Naive thymus-derived CD4-positive, alpha-beta T cell (primary cell): ENCODE measurements at regions of chr19 and their contacts with region 1.

Region 1: DNA sequence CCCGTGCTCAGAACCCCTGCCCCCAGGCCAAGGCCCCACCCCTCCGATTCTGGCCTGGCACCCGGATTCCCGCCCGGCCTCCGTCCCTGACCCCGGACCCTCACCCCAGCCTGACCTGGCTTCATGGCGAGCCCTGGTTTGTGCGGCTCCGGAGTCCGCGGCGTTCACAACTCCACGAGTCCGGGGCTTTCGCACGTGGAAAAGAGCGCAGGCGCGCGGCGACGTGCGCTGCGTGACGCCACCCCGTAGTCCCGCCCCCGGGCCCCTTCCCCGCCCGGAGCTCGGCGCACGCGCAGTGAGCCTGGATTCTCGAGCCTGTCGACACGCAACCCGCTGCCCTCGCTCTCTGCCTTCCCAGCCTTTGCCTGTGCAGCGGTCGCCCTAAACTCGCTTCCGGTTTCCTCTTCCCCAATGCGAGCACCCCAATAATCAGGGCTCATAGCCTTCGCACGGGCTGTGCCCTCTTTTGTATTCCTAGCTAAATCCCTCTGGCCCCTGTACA is at the start of gene FBL:
- DNase-seq: peak; percentile 93 to 99 (median 97)
- ATAC-seq: peak; percentile 95
- H3K4me3 ChIP-seq: peak within 1 kb of the TSS; percentile 95
- H3K4me3 Mint-ChIP-seq: peak within 1 kb of the TSS; percentile 82 to 95 (median 92)
- H3K27ac ChIP-seq: peak within 1 kb of the TSS; percentile 94
- H3K27ac Mint-ChIP-seq: peak within 1 kb of the TSS; percentile 86 to 99 (median 95)
- H3K4me1 ChIP-seq: peaks cover 13 to 43% of the 10 kb centered on the region in 2 donors
- H3K4me1 Mint-ChIP-seq: peaks cover 38 to 55% (median 45%) of the 10 kb centered on the region in 7 donors
- H3K27me3 ChIP-seq: no peaks in the 10 kb centered on the region
- H3K27me3 Mint-ChIP-seq: peaks cover 0 to under 1% (median 0%) of the 10 kb centered on the region in 5 donors
- total RNA-seq, gene FBL: 237 to 387 (median 369) TPM

Region 2: DNA sequence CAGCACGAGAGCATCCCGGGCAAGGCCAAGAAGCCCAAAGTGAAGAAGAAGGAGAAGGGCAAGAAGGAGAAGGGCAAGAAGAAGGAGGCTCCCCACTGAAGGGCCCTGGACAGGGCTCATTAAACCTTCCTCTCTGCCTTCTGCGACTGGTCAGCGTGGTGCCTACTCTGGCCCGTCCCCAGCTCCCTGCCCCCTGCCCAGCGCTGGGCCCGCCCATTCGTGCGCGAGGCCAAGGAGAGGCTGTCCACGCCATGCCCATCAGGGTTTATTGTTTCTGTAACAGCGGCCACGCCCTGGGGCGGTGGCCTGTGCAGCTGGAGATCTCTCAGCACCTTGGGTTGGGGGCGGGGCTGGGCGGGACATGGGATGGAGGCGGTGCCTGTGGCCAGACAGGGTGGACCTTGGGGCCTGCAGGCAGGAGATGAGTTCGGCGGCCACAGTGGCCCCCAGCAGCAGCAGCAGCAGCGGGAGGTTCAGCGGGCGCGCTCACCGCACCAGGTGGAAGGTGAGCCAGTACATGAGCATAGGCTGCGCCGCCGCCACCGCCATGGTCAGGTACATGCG is 1541.3 kb before region 1 on chr19:
- CTCF ChIA-PET with region 1: no interaction called
- POLR2A ChIA-PET with region 1: no interaction called
- intact Hi-C with region 1: no loop called
- DNase-seq: no peak
- ATAC-seq: no peak
- H3K4me3 ChIP-seq: no peak overlapping the region
- H3K4me3 Mint-ChIP-seq: no peak overlapping the region
- H3K27ac ChIP-seq: no peak overlapping the region
- H3K27ac Mint-ChIP-seq: no peak overlapping the region
- H3K4me1 ChIP-seq: no peaks in the 10 kb centered on the region
- H3K4me1 Mint-ChIP-seq: peaks cover 0 to 8% (median 0%) of the 10 kb centered on the region in 7 donors
- H3K27me3 ChIP-seq: no peaks in the 10 kb centered on the region
- H3K27me3 Mint-ChIP-seq: no peaks in the 10 kb centered on the region

Region 3: DNA sequence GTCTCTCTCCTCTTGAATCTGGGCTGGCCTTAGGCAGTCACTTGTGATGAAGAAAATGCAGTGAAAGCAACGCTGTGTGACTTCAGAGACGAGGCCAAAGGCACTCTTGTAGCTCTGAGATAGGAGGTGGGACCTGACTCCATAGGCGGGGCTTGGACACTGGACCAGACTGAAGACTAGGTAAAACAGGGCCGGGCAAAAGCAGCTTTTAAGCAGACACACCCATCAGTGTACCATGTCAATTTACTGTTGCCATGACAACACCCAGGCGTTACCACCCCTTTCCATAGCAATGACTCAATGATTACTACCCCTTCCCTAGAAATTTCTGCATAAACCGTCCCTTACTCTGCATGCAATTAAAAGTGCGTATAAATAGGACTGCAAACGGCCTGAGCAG is 299.6 kb before region 1 on chr19:
- CTCF ChIA-PET with region 1: interaction called, 4 read pairs
- POLR2A ChIA-PET with region 1: no interaction called
- intact Hi-C with region 1: loop called (anchors 1 to 2 kb)
- DNase-seq: no peak
- ATAC-seq: no peak
- H3K4me3 ChIP-seq: no peak overlapping the region
- H3K4me3 Mint-ChIP-seq: peak overlapping the region in 5 of 10 donors; percentile 15 to 55 (median 43)
- H3K27ac ChIP-seq: no peak overlapping the region
- H3K27ac Mint-ChIP-seq: peak overlapping the region in 8 of 9 donors; percentile 28 to 83 (median 70)
- H3K4me1 ChIP-seq: peaks cover 5 to 35% of the 10 kb centered on the region in 2 donors
- H3K4me1 Mint-ChIP-seq: peaks cover 24 to 58% (median 48%) of the 10 kb centered on the region in 7 donors
- H3K27me3 ChIP-seq: no peaks in the 10 kb centered on the region
- H3K27me3 Mint-ChIP-seq: peaks cover 0 to 4% (median 0%) of the 10 kb centered on the region in 5 donors

Region 4: GRCh38 chr19:39679056-39679790 is 167.0 kb before region 1 on chr19:
- CTCF ChIA-PET with region 1: interaction called, 11 read pairs
- POLR2A ChIA-PET with region 1: no interaction called
- intact Hi-C with region 1: loop called (anchors 1 to 2 kb)
- DNase-seq: peak in 4 of 9 donors; percentile 18 to 59 (median 24)
- ATAC-seq: peak; percentile 73
- H3K4me3 ChIP-seq: peak overlapping the region; percentile 43
- H3K4me3 Mint-ChIP-seq: peak overlapping the region; percentile 80 to 92 (median 84)
- H3K27ac ChIP-seq: peak overlapping the region; percentile 50
- H3K27ac Mint-ChIP-seq: peak overlapping the region; percentile 83 to 97 (median 92)
- H3K4me1 ChIP-seq: peaks cover 15 to 32% of the 10 kb centered on the region in 2 donors
- H3K4me1 Mint-ChIP-seq: peaks cover 22 to 61% (median 46%) of the 10 kb centered on the region in 7 donors
- H3K27me3 ChIP-seq: no peaks in the 10 kb centered on the region
- H3K27me3 Mint-ChIP-seq: no peaks in the 10 kb centered on the region

Region 5: DNA sequence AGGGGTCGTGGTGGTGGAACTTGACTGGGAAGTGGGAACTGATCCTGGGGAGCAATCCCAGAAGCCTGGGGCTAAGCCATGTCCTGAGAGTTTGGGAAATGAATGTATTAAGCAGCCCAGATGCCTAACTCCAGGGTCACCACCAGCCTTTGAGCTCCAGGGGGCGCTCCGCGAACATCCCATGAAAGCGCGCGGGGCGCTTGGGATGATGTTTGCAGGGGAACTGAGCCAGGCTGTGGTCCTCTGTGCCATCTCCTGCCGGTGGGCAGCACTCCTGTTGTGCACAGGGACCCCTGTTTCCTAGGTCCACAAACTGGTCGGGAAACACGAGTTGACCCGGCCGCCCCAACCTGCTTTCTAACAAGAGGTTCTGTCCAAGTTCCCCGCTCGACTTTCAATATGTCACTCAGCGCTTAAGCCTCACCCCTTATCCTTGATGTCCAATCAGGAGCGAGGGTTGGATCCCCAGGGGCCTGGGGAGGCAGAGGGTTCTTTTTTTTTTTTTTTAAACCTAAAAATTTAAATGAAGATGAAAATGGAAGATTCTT is 53.2 kb before region 1 on chr19:
- CTCF ChIA-PET with region 1: interaction called, 41 read pairs
- POLR2A ChIA-PET with region 1: interaction called, 4 read pairs
- intact Hi-C with region 1: loop called (anchors 1 kb)
- DNase-seq: peak; percentile 56 to 80 (median 72)
- ATAC-seq: peak; percentile 94
- H3K4me3 ChIP-seq: peak overlapping the region; percentile 74
- H3K4me3 Mint-ChIP-seq: peak overlapping the region; percentile 58 to 84 (median 80)
- H3K27ac ChIP-seq: no peak overlapping the region
- H3K27ac Mint-ChIP-seq: no peak overlapping the region
- H3K4me1 ChIP-seq: no peaks in the 10 kb centered on the region
- H3K4me1 Mint-ChIP-seq: peaks cover 0 to 7% (median 0%) of the 10 kb centered on the region in 7 donors
- H3K27me3 ChIP-seq: no peaks in the 10 kb centered on the region
- H3K27me3 Mint-ChIP-seq: peaks cover 0 to 18% (median 2%) of the 10 kb centered on the region in 5 donors

Region 6: DNA sequence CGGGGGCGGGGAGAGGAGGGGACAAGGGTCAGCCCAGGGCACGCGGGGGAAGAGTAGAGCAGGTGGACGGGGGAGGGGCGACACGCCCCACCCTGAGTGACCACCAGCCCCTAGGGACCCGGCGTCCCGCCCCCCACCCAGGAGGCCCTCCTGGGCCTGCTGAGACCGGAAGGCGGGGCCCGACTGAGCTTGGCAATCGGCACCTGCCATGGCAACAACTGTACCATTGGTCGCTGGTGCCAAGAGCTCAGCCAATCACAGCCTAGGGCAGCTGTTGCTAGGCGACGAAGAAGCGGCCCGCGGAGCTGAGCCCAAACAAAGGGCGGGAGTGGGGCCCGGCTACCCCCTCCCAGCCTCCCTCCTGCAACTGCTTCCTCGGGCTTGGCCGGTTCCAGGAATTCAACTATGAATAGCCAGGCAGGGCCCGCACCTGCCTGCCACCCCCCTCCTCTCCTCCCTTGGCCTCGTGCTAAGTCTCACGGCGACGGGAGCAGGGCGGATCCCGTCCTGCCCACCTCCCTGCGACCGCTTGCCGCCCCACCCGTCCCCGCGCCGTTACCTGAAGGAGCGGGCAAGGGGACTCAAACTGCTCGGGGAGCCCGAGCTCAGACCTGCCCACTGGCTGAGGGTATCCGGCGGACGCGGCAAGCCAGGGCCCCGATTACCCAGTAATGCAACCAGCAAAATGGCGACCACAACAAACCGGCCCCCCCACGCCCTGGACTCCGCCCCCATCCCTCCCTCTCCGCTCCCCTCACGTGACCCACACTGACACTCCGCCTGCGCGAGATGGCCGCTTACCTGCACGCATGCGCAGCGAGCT is 12.6 kb before region 1 on chr19 and contains the start of gene DYRK1B:
- CTCF ChIA-PET with region 1: interaction called, 10 read pairs
- POLR2A ChIA-PET with region 1: interaction called, 42 read pairs
- intact Hi-C with region 1: loop called (anchors 1 kb)
- DNase-seq: peak; percentile 90 to 99 (median 98)
- ATAC-seq: peak; percentile 92
- H3K4me3 ChIP-seq: peak within 1 kb of the TSS; percentile 100
- H3K4me3 Mint-ChIP-seq: peak within 1 kb of the TSS; percentile 60 to 88 (median 81)
- H3K27ac ChIP-seq: peak within 1 kb of the TSS; percentile 96
- H3K27ac Mint-ChIP-seq: peak within 1 kb of the TSS; percentile 85 to 96 (median 92)
- H3K4me1 ChIP-seq: peaks cover 17 to 23% of the 10 kb centered on the region in 2 donors
- H3K4me1 Mint-ChIP-seq: peaks cover 19 to 37% (median 27%) of the 10 kb centered on the region in 7 donors
- H3K27me3 ChIP-seq: no peaks in the 10 kb centered on the region
- H3K27me3 Mint-ChIP-seq: no peaks in the 10 kb centered on the region
- total RNA-seq, gene DYRK1B: 12.3 to 38.9 (median 23.5) TPM

Region 7: DNA sequence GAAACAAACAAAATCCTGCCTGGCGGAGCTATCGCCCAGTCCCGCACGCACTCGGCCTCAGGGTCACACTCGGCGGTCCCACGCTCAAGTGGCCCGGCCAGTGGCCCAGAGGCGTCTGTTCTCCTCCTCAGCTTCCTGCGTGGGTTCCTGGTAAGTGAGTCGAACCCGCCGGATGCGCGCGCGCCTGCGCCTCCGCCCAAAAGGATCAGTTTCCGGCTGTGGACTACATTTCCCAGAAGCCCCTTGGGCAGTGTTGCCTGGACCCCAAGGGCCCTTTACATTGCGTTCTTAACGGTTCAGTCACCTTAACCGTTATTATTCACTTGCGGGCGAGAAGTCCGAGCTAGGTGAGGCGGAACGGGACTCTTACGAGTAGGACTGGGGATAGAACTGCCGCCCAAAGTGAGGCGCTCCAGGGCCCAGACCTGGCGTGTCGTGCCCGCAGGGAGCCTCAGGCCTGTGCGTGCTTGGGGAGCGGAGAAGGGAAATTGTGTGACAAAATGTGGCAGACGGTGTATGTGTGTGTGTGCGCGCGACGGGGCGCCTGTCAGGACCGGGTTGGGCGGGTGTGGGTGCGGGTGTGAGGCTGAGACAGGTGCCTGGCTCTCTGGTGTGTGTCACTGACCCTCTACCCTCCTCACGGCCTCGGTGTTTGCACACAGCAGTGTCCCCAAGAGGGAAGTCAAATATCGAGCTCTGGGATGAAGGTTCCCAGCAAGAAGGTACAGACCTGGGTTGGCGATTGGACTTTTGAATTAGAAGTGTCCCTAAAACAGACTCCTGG is 150.8 kb after region 1 on chr19 and contains the start of gene ZNF546:
- CTCF ChIA-PET with region 1: no interaction called
- POLR2A ChIA-PET with region 1: interaction called, 3 read pairs
- intact Hi-C with region 1: loop called in 1 of 2 experiments (anchors 1 kb)
- DNase-seq: peak; percentile 67 to 91 (median 90)
- ATAC-seq: peak; percentile 96
- H3K4me3 ChIP-seq: peak within 1 kb of the TSS; percentile 91
- H3K4me3 Mint-ChIP-seq: peak within 1 kb of the TSS; percentile 87 to 100 (median 95)
- H3K27ac ChIP-seq: peak within 1 kb of the TSS; percentile 85
- H3K27ac Mint-ChIP-seq: peak within 1 kb of the TSS; percentile 84 to 100 (median 95)
- H3K4me1 ChIP-seq: peaks cover 10 to 13% of the 10 kb centered on the region in 2 donors
- H3K4me1 Mint-ChIP-seq: peaks cover 20 to 56% (median 41%) of the 10 kb centered on the region in 7 donors
- H3K27me3 ChIP-seq: no peaks in the 10 kb centered on the region
- H3K27me3 Mint-ChIP-seq: no peaks in the 10 kb centered on the region
- total RNA-seq, gene ZNF546: 4.7 to 24.8 (median 7.5) TPM